MCF 10A (cell line): ENCODE measurements at regions of chr9 and their contacts with region 1.

Region 1: DNA sequence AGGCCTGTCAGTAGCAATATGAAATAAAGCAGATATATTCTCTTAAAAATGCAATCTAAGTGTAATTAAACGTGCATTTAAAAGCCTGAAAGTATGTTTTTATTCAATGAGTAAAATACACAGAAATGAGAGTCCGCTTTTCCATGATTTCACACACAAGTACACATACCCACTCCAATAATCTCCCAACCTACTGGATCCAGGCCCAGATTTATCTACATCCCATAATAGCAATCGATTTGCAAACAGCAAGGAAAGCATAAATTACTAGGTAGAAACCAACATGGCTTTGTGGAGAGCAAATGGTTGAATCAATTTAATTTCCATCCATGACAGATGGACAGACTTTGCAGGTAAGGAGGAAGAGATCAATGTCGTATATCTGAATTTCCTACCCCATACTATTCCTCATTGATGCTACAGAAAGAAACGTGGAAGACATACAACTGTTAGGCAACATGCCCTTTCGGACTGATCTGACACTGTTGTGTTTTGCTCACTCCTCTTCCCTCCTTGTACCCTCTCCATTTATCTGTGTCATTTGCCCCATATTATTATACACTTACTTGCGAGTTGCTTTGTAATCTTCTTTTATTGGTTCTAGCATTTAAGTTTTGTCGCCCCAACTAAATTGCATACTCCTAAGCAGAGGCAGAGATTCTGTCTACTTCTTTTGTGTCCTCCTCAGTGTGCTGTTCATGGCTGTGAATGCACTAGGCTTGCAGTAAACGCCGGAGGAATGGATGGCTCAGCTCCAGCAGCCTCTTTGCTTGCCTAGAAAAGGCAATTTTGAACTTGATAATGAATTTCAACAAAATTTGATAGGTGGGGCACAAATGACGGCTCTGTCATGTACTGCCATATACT is 133.6 kb downstream of the NFIB start:
- DNase-seq: no peak
- H3K4me3 Mint-ChIP-seq: peak overlapping the region; percentile 77
- H3K27ac Mint-ChIP-seq: peak overlapping the region; percentile 63
- H3K4me1 Mint-ChIP-seq: peaks cover 34% of the 10 kb centered on the region
- H3K27me3 Mint-ChIP-seq: no peaks in the 10 kb centered on the region
- CTCF ChIP-seq: no peak

Region 2: GRCh38 chr9:13832451-13832850 is 347.9 kb before region 1 on chr9:
- CTCF ChIA-PET with region 1: no interaction called
- POLR2A ChIA-PET with region 1: no interaction called
- intact Hi-C with region 1: no loop called
- DNase-seq: no peak
- H3K4me3 Mint-ChIP-seq: no peak overlapping the region
- H3K27ac Mint-ChIP-seq: no peak overlapping the region
- H3K4me1 Mint-ChIP-seq: no peaks in the 10 kb centered on the region
- H3K27me3 Mint-ChIP-seq: no peaks in the 10 kb centered on the region
- CTCF ChIP-seq: no peak

Region 3: GRCh38 chr9:14051459-14051858 is 128.9 kb before region 1 on chr9:
- CTCF ChIA-PET with region 1: no interaction called
- POLR2A ChIA-PET with region 1: no interaction called
- intact Hi-C with region 1: no loop called
- DNase-seq: peak; percentile 35
- H3K4me3 Mint-ChIP-seq: no peak overlapping the region
- H3K27ac Mint-ChIP-seq: no peak overlapping the region
- H3K4me1 Mint-ChIP-seq: peaks cover 6% of the 10 kb centered on the region
- H3K27me3 Mint-ChIP-seq: no peaks in the 10 kb centered on the region
- CTCF ChIP-seq: no peak

Region 4: GRCh38 chr9:14198841-14199455 is 18.6 kb after region 1 on chr9:
- CTCF ChIA-PET with region 1: interaction called, 4 read pairs
- POLR2A ChIA-PET with region 1: interaction called, 17 read pairs
- intact Hi-C with region 1: no loop called
- DNase-seq: peak; percentile 72
- H3K4me3 Mint-ChIP-seq: no peak overlapping the region
- H3K27ac Mint-ChIP-seq: peak overlapping the region; percentile 10
- H3K4me1 Mint-ChIP-seq: peaks cover 24% of the 10 kb centered on the region
- H3K27me3 Mint-ChIP-seq: no peaks in the 10 kb centered on the region
- CTCF ChIP-seq: no peak

Region 5: DNA sequence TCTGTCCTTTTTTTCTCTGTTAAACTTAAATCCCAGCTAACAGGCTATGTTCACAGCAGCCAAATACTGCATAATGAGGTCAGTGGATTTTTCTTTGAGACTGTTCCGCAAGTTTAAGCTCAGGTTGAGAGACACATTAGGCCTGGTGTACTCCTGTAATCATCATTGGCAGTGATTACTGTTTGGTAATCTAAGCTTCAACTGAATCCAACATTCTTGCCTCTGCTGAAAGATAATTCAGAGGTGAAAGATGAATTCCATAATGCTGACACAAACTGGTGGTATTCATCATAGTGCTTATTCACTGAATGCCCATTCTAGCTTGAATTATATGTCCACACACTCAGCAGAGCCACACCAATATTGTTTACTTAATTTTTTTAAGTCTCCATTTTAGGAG is 25.1 kb after region 1 on chr9:
- CTCF ChIA-PET with region 1: no interaction called
- POLR2A ChIA-PET with region 1: interaction called, 17 read pairs
- intact Hi-C with region 1: no loop called
- DNase-seq: peak; percentile 70
- H3K4me3 Mint-ChIP-seq: no peak overlapping the region
- H3K27ac Mint-ChIP-seq: peak overlapping the region; percentile 57
- H3K4me1 Mint-ChIP-seq: peaks cover 40% of the 10 kb centered on the region
- H3K27me3 Mint-ChIP-seq: no peaks in the 10 kb centered on the region
- CTCF ChIP-seq: no peak